Activated naive CD4-positive, alpha-beta T cell treated with anti-CD3 and anti-CD28 coated beads for 36 hours (primary cell): ENCODE measurements at regions of chr11 and their contacts with region 1.

Region 1: DNA sequence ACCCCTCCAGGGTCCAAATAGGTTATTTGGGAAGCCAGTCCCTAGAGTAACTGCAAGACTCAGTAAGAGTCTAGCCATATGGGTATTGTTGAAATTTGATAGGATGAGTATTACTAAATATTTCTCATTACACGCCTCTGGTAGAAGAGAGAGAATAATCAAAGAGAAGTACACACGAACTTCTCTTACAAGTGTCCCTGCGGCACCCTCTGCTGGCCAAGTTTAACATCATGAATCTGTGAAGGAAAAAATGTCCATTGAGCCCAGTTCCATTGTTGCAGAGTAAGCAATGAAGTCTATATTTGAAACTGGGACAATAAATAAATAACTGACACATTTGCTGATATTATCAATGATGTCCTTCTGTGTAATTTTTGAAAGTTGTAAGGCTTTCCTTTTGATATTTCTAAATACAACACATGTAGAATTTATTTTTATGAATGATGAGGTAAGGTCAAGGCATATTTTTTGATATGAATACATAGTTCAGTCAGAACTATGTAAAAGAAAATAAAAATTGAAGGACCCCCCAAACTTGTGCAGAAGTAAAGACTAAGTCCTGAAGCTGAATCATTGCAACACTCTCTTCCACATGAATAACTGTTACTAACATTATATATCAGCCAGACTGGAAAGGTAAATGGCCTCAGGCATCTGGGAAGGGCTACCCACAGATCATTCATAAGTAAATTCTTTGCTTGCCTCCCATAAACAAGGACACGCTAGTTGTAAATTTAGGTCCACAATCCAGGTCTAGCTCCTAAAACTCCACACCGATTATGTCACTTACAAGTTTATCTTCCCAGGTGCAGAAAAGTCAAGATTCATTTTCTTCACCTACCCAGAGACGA is 10.0 kb downstream of the OR51L1 start:
- DNase-seq: peak; percentile 62
- H3K4me3 Mint-ChIP-seq: no peak overlapping the region
- H3K27ac Mint-ChIP-seq: no peak overlapping the region
- H3K4me1 Mint-ChIP-seq: no peaks in the 10 kb centered on the region
- H3K27me3 Mint-ChIP-seq: peaks cover 13% of the 10 kb centered on the region

Region 2: DNA sequence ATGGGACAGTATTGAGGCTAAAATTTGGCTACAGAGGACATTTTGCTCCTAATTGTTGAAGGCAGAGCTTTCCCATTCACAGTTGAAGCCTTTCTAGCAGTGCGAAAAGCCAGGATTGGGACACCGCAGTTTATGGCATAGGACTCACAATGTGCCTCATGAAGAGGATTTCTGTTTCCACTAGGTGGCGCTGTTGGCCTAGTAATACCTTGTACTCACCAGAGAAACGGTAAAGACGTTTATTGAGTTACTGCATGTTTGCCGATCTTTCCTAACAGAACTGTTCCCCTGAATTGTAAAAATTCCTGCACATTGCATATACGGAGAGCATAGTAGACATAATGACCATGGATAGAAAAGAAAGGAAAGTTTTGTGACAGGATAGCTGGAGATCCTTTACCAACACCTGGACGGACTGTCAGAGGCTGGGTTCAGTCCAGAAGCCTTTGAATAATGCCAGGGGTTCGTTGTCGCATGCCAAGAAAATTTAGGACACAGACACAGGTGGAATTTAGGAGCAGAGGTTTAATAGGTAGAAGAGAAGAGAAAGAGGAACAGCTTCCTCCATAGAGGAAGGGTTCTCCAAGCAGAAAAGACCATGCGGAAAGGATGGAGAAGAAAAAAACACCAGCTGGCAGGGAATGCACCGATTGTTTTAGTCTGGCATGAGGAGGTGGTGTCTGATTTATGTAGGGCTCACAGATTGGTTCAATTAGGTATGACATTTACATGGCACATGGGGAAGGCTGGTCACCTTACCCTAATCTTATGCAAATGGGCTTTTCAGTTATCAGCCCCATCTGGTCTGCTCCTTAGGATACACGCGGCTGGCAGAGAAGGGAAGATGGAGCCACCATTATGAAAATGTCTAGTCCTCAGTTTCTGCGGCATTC is 378.2 kb before region 1 on chr11:
- CTCF ChIA-PET with region 1: no interaction called
- intact Hi-C with region 1: loop called (anchors 2 kb)
- DNase-seq: peak; percentile 81
- H3K4me3 Mint-ChIP-seq: no peak overlapping the region
- H3K27ac Mint-ChIP-seq: no peak overlapping the region
- H3K4me1 Mint-ChIP-seq: no peaks in the 10 kb centered on the region
- H3K27me3 Mint-ChIP-seq: peaks cover 34% of the 10 kb centered on the region

Region 3: DNA sequence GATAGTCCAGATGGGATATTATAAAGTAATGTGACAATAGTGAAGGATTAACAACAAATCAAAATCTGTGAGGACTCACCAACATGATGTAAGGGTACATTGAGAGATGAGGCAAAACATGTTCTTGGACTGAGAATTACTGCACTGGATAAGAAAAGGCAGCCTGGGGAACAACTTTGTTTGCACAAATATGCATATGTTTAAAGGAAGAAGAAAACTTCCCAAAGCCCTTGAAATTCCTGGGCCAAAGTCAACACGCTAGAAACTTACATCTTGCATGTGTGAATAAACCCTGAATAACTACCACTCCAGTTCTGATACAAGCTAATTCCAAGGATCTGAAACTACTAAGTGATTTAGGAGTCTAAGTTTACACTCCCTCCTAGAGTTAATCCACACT is 132.4 kb after region 1 on chr11:
- CTCF ChIA-PET with region 1: no interaction called
- intact Hi-C with region 1: no loop called
- DNase-seq: no peak
- H3K4me3 Mint-ChIP-seq: no peak overlapping the region
- H3K27ac Mint-ChIP-seq: no peak overlapping the region
- H3K4me1 Mint-ChIP-seq: no peaks in the 10 kb centered on the region
- H3K27me3 Mint-ChIP-seq: peaks cover 3% of the 10 kb centered on the region

Region 4: DNA sequence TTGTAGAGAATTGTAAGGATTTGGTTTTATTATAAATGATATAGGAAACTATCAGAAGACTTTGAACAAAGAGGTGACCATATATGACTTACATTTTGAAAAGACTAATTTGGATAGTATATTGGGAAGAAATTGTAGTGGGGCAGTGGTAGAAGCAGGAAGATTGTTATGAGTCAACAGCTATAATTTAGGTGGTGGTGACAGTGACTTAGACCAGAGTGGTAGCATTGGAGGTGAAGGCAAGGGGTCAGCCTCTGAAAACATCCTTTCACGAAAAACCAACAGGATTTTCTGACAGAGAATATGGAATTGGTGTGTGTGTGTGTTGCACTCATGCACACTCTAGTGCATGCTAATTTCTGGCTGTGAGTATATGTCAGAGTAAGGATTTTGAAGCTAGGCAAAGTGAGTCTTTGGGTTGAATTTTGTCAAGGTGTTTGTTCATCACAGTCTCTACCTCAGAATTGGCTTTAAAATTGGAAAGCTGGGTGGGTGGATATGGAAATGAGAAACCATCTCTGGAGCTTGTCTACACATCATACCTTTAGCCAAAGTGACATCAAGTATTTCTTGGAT is 273.2 kb after region 1 on chr11:
- CTCF ChIA-PET with region 1: no interaction called
- intact Hi-C with region 1: no loop called
- DNase-seq: no peak
- H3K4me3 Mint-ChIP-seq: no peak overlapping the region
- H3K27ac Mint-ChIP-seq: no peak overlapping the region
- H3K4me1 Mint-ChIP-seq: no peaks in the 10 kb centered on the region
- H3K27me3 Mint-ChIP-seq: no peaks in the 10 kb centered on the region